HepG2 (cell line): ENCODE measurements at regions of chr2 and their contacts with region 1.

Region 1: GRCh38 chr2:132267105-132267497 is 105.3 kb upstream of the ANKRD30BL start:
- DNase-seq: no peak
- ATAC-seq: no peak
- H3K4me3 ChIP-seq: no peak overlapping the region
- H3K27ac ChIP-seq: no peak overlapping the region
- H3K4me1 ChIP-seq: no peaks in the 10 kb centered on the region
- H3K27me3 ChIP-seq: 0 out of 5 replicates have a peak, but pooled peaks cover 0 to 7% of the 10 kb centered on the region in 2 experiments
- CTCF ChIP-seq: no peak
- EP300 ChIP-seq: no peak
- POLR2A ChIP-seq: no peak
- RAD21 ChIP-seq: no peak

Region 2: DNA sequence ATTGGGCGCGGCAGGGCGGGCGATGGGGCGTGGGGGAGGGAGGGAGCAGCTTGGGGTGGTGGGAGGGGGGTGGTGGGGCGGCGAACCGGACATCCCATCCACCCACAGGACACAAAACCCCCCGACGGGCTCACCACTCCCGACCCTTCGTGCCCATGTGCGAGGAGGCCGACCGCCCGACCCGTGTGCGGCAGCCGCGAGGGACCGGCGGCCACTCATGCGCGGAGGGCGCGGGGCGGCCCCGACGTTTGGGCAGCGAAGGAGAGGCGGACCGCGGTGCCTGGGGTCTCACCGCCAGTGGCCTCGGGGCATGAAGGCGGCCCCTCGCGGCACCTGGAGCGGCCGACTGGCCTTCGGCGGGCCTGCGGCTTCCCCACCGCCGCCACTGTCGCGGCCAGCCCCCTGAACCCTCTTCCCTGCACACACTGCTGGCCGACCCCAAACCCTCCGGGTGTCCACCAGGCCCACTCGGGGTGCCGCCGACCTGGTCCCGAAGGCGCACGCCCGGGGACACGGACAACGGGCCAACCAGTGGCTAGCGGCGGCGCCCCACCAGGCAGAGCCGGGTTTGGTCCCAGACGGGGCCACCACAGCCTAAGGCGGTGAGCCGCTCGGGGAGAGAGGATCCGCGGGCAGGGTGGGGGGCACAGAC is 10.7 kb before region 1 on chr2:
- CTCF ChIA-PET with region 1: no interaction called
- POLR2A ChIA-PET with region 1: no interaction called
- in situ Hi-C with region 1: no loop called
- intact Hi-C with region 1: no loop called
- DNase-seq: no peak
- ATAC-seq: no peak
- H3K4me3 ChIP-seq: no peak overlapping the region
- H3K27ac ChIP-seq: no peak overlapping the region
- H3K4me1 ChIP-seq: no peaks in the 10 kb centered on the region
- H3K27me3 ChIP-seq: no peaks in the 10 kb centered on the region
- CTCF ChIP-seq: no peak
- EP300 ChIP-seq: no peak
- POLR2A ChIP-seq: no peak
- RAD21 ChIP-seq: no peak

Region 3: DNA sequence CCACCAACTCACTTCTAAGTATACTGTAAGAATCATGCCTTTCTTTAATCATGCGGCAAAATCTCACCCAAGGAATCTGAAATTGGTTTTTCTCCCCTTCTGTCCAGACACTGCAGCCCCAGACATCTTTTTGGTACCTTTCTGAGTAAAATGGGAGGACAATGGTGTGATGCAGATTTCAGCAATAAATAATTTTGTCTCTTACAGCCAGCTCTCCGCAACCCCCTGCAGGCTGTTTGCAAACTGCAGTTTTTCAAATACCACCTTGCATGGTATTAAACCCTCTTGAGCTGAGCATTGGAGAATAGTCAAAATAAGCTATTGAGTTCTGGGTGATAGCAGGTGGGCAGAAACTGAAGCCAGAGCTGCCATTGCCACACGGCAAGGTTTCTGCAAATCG is 181.7 kb after region 1 on chr2:
- CTCF ChIA-PET with region 1: interaction called, 7 read pairs
- POLR2A ChIA-PET with region 1: no interaction called
- in situ Hi-C with region 1: no loop called
- intact Hi-C with region 1: loop called (anchors 2 kb)
- DNase-seq: no peak
- ATAC-seq: peak; percentile 84
- H3K4me3 ChIP-seq: no peak overlapping the region
- H3K27ac ChIP-seq: no peak overlapping the region
- H3K4me1 ChIP-seq: no peaks in the 10 kb centered on the region
- H3K27me3 ChIP-seq: no peaks in the 10 kb centered on the region
- CTCF ChIP-seq: peak; percentile 54
- EP300 ChIP-seq: no peak
- POLR2A ChIP-seq: no peak
- RAD21 ChIP-seq: peak; percentile 51; the same call in 1 of the 2 replicates

Region 4: GRCh38 chr2:132651115-132652045 is 384.3 kb after region 1 on chr2:
- CTCF ChIA-PET with region 1: no interaction called
- POLR2A ChIA-PET with region 1: no interaction called
- in situ Hi-C with region 1: no loop called
- intact Hi-C with region 1: loop called (anchors 10 kb)
- DNase-seq: peak; percentile 59
- ATAC-seq: peak; percentile 99
- H3K4me3 ChIP-seq: no peak overlapping the region
- H3K27ac ChIP-seq: no peak overlapping the region
- H3K4me1 ChIP-seq: no peaks in the 10 kb centered on the region
- H3K27me3 ChIP-seq: no peaks in the 10 kb centered on the region
- CTCF ChIP-seq: peak; percentile 76
- EP300 ChIP-seq: no peak
- POLR2A ChIP-seq: no peak
- RAD21 ChIP-seq: 0 out of 2 replicates have a peak, but pooled peaks have one; percentile 39

Region 5: DNA sequence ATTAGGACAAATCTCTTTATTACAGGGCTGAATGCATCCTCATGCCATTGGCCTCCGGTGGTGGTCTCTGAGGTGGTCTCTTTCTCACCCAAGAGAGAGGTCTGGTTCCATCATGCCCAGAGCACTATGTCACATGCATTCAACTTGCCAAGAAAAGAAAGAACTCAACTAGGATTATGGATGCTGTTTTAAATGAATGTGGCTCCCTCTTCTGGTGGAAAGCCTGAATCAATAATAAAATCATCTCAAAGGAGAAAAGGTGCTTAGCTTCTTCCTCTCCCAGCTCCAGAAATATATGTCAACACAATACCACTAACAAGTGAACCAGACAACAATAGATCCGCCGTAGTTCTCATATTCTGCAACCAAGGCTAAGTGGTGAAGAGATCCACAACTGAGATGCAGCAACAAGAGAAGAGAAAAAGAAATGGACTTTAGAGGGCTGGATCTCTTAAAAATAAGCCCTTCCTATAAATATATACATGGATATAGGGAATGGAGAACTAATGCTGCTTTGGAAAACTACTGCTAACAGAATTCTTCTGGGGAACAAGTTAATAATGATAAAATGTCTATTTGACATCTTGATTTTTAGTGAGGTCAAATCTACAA is 904.4 kb after region 1 on chr2:
- CTCF ChIA-PET with region 1: interaction called, 9 read pairs
- POLR2A ChIA-PET with region 1: no interaction called
- in situ Hi-C with region 1: no loop called
- intact Hi-C with region 1: loop called (anchors 1 kb)
- DNase-seq: peak; percentile 58
- ATAC-seq: peak; percentile 73
- H3K4me3 ChIP-seq: no peak overlapping the region
- H3K27ac ChIP-seq: no peak overlapping the region
- H3K4me1 ChIP-seq: no peaks in the 10 kb centered on the region
- H3K27me3 ChIP-seq: no peaks in the 10 kb centered on the region
- CTCF ChIP-seq: peak; percentile 84
- EP300 ChIP-seq: no peak
- POLR2A ChIP-seq: no peak
- RAD21 ChIP-seq: peak; percentile 75

Region 6: DNA sequence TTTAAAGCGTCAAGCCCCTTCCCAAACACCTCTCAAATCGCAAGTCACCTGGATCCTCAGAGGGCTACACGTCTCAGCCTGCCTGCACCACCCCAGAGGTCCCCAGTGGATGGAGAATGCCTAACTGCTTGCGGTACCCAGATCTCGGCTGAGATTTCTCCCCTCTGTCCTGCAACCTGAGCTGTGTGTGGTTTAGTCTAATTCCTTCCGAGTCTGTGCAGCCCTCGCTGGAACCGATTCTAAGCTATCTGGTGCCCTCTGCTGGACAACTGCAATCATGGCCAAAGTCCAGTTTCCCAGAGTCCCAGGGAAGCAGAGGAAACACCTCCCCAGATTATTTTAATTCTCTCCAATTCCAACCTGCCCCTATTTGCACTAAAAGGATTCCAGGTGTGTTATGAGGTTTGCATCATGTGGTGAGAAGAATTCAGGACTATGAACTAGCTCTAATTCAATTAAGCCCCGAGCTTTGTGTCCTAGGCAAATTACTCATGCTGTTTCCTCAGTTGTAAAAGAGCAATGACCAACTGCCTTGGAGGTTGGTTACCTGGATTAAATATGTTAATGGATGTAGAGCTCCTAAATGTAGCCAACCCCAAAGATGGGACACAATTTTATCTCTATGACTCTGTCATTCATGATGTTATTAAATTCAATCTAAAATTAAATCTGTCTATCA is 1577.3 kb after region 1 on chr2:
- CTCF ChIA-PET with region 1: no interaction called
- POLR2A ChIA-PET with region 1: no interaction called
- in situ Hi-C with region 1: no loop called
- intact Hi-C with region 1: loop called (anchors 10 kb)
- DNase-seq: peak; percentile 58
- ATAC-seq: peak; percentile 96
- H3K4me3 ChIP-seq: no peak overlapping the region
- H3K27ac ChIP-seq: no peak overlapping the region
- H3K4me1 ChIP-seq: no peaks in the 10 kb centered on the region
- H3K27me3 ChIP-seq: peaks cover 0 to 1% of the 10 kb centered on the region in 2 experiments; a peak in 2 of 5 replicates
- CTCF ChIP-seq: peak; percentile 93
- EP300 ChIP-seq: no peak
- POLR2A ChIP-seq: no peak
- RAD21 ChIP-seq: peak; percentile 86